ENCODE measurements at regions of chr11 and their contacts with region 1.

Region 1: GRCh38 chr11:30346068-30346688 is 23.3 kb downstream of the ARL14EP start:
- DNase-seq: no peak
- H3K4me3 ChIP-seq: no peak overlapping the region
- H3K27ac ChIP-seq: no peak overlapping the region
- H3K4me1 ChIP-seq: no peaks in the 10 kb centered on the region
- H3K27me3 ChIP-seq: no peaks in the 10 kb centered on the region
- CTCF ChIP-seq: peak; percentile 75

Region 2: DNA sequence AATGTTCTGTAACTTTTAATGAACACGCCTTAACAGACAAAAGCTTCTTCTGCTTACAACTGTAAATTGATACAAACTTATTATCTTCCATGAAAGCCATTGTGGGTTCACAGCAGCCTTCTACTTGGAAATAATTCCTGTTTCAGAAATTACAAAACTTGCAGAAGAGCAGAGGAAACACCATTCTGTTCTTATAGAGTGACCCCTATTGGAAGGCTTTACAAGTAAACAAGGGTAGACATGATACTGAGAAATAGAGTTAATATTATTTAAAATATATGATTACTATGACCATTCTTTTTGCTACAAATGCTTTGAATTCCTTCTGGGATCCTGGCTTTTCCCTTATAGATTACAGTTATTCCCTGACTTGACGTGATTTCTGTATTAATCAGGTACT is 297.0 kb before region 1 on chr11:
- intact Hi-C with region 1: no loop called
- DNase-seq: no peak
- H3K4me3 ChIP-seq: no peak overlapping the region
- H3K27ac ChIP-seq: no peak overlapping the region
- H3K4me1 ChIP-seq: no peaks in the 10 kb centered on the region
- H3K27me3 ChIP-seq: no peaks in the 10 kb centered on the region
- CTCF ChIP-seq: peak; percentile 48

Region 3: GRCh38 chr11:30594646-30595411 is 248.7 kb after region 1 on chr11:
- intact Hi-C with region 1: loop called (anchors 10 kb)
- DNase-seq: no peak
- H3K4me3 ChIP-seq: no peak overlapping the region
- H3K27ac ChIP-seq: no peak overlapping the region
- H3K4me1 ChIP-seq: no peaks in the 10 kb centered on the region
- H3K27me3 ChIP-seq: no peaks in the 10 kb centered on the region
- CTCF ChIP-seq: no peak

Region 4: DNA sequence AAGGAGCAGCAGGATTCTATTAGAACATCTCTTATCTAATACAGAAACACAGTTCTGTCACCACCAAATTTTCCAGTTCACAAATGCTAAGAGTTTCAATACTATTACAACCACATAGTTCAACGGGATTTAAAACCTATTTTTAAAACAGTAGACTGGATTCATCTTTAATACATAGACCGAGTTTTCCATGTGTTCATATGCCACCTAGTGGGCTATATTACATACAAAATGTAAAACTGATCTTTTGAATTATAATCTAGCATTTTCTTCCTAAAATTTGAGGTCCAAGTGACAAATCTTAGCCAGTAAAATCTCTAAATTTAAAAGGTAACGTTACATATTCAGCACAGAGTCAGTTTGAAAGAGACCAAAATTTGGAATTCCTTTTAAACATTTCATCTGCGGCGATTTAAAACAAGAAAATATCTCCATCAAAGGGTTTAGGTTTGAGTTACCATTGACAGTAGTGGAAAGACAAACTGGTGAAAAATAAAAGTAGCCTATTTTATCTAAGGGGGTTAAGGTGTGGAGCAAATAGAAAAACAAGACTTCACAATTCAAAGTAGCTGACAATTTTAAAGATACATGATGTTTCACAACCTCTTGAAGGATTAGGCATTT is 509.3 kb after region 1 on chr11:
- intact Hi-C with region 1: loop called (anchors 5 kb)
- DNase-seq: no peak
- H3K4me3 ChIP-seq: no peak overlapping the region
- H3K27ac ChIP-seq: no peak overlapping the region
- H3K4me1 ChIP-seq: peaks cover 4% of the 10 kb centered on the region
- H3K27me3 ChIP-seq: no peaks in the 10 kb centered on the region
- CTCF ChIP-seq: peak; percentile 67

Region 5: DNA sequence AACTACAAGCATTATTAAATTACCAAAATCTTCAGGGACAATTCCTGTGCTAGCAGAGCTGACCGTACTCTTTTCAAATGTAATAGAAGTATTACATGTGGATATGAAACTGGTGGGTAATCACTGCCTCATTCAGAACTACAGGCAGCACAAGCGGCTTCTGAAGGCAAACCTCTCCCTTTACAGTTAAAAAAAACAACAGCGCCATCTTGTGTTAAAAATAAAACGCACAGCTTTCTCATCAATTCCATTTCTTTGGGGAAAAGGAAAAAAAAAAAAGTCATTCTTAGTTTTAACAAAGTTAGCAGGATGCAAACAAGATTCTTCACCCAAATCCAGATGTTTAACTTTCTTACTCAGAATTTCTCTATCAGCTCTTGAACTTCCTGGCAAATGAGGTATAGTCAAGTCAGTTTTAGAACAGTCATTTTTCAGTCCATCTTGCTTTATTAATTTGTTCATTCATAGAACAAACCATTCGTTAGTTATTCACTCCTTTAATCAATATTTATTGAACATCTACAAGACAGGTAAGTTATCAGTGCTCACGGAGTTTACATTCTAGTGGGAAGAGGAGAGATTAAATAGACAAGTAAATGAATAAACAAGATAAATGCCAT is 571.8 kb after region 1 on chr11:
- intact Hi-C with region 1: loop called (anchors 5 kb)
- DNase-seq: no peak
- H3K4me3 ChIP-seq: no peak overlapping the region
- H3K27ac ChIP-seq: no peak overlapping the region
- H3K4me1 ChIP-seq: no peaks in the 10 kb centered on the region
- H3K27me3 ChIP-seq: peaks cover 11% of the 10 kb centered on the region
- CTCF ChIP-seq: peak; percentile 86